ENCODE measurements at regions of chr11 and their contacts with region 1.

Region 1: GRCh38 chr11:59753650-59754493 is 1.3 kb upstream of the STX3 start:
- DNase-seq: peak; percentile 78
- H3K27ac ChIP-seq: peak overlapping the region; percentile 84
- CTCF ChIP-seq: peak; percentile 87

Region 2: GRCh38 chr11:59801981-59802638 is 48.2 kb after region 1 on chr11:
- CTCF ChIA-PET with region 1: interaction called, 33 read pairs
- POLR2A ChIA-PET with region 1: no interaction called
- DNase-seq: no peak
- H3K27ac ChIP-seq: no peak overlapping the region
- CTCF ChIP-seq: no peak

Region 3: GRCh38 chr11:59866397-59866796 is 112.5 kb after region 1 on chr11 and contains the start of gene TCN1:
- CTCF ChIA-PET with region 1: no interaction called
- POLR2A ChIA-PET with region 1: no interaction called
- DNase-seq: no peak
- H3K27ac ChIP-seq: no peak within 1 kb of the TSS
- CTCF ChIP-seq: no peak

Measured in RWPE1 (cell line).